Activated CD4-positive, alpha-beta T cell treated with anti-CD3 and anti-CD28 coated beads, Interleukin-2, amount 10 ng/mL, durations not matched to agents 24 days and 14 days (primary cell): ENCODE measurements at regions of chr1 and their contacts with region 1.

Region 1: DNA sequence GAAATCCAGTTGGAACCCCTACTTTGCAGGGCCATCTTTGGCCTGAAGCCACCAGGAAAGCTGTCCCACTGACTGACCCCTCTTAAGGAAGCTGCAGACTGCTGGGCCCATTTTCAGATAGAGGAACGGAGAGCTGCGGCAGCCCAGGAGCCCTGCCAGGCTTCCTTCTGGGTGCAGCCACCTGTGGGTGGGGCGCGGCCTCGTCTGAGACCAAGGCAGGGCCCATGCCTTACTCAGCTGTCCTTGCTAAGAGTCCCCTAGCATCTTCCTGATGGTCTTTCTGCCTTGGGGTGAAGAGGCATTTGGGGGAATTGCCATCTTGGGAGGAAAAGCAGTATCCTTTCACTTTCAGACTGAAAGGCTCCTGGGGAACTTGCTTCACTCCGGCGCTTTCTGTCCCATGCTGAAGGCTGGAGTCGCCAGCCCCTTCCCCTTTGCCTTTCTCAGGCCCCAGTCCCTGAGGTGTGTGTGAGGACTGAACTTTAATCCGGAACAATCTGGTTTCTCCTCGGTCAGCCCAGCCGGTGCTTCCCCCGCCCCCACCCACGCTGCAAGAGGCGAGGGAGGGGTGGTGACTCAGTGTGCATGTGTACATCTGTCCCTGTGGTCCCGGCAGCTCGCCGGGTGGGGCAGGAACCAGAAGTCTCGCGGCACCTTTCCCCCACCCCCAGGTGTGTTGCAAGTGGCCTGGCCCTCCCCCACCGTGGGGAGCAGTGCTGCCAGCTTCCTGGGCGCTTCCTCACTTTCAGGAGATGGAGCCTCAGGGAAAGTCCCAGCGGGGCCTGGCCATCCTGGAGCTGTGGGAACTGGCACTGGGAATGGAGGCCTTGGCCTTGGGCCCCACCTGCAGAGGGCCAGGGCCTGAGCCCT is 5.1 kb downstream of the ZC3H12A start:
- DNase-seq: peak; percentile 94
- H3K4me3 Mint-ChIP-seq: peak overlapping the region; percentile 97
- H3K27ac Mint-ChIP-seq: peak overlapping the region; percentile 98
- H3K4me1 Mint-ChIP-seq: peaks cover 32% of the 10 kb centered on the region
- H3K27me3 Mint-ChIP-seq: no peaks in the 10 kb centered on the region

Region 2: DNA sequence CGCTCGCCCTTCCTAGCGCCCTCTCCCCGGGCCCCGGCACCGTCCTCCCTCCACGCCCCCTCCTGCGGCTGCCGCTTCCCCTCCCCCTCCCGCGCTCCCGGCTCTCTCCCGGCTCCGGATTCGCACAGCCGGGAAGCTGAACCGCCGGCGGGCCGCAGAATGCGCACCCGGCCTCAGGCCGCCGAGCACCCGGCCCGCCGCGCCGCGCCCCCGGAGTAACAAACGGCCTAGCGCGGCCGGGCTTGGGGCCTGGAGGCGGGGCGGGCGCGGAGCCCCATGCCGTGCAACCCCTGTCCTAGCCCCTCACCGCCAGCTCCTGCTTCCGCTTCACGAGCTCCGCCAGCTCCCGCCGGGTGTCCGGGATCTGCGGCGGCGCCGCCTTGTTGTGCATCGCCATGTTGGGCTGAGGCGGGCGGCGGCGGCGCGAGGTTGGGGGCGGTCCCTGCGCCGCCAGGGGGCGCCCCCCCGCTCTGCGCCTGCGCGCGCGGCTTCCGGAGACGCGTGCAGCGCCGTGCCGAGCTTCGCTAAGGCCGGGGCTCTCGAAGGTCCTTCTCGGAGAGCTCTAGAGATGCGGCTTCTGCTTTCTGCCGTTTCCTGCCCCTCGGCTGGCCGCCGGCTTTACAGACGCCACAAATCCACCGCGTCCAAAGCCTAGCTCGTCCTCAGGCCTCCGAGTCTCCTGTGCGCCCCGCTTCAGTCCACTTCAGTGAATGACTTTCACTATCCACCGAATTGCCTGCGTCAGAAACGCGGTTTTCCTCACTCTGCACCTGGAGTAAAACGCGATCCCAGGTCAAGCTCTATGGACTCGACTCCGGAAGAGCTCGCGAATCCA is 35.1 kb after region 1 on chr1 and contains the start of gene MEAF6:
- intact Hi-C with region 1: loop called (anchors 1 kb)
- DNase-seq: peak; percentile 96
- H3K4me3 Mint-ChIP-seq: peak within 1 kb of the TSS; percentile 98
- H3K27ac Mint-ChIP-seq: peak within 1 kb of the TSS; percentile 97
- H3K4me1 Mint-ChIP-seq: peaks cover 39% of the 10 kb centered on the region
- H3K27me3 Mint-ChIP-seq: no peaks in the 10 kb centered on the region
- total RNA-seq, gene MEAF6: 94.4 and 95.6 TPM in 2 replicates

Region 3: DNA sequence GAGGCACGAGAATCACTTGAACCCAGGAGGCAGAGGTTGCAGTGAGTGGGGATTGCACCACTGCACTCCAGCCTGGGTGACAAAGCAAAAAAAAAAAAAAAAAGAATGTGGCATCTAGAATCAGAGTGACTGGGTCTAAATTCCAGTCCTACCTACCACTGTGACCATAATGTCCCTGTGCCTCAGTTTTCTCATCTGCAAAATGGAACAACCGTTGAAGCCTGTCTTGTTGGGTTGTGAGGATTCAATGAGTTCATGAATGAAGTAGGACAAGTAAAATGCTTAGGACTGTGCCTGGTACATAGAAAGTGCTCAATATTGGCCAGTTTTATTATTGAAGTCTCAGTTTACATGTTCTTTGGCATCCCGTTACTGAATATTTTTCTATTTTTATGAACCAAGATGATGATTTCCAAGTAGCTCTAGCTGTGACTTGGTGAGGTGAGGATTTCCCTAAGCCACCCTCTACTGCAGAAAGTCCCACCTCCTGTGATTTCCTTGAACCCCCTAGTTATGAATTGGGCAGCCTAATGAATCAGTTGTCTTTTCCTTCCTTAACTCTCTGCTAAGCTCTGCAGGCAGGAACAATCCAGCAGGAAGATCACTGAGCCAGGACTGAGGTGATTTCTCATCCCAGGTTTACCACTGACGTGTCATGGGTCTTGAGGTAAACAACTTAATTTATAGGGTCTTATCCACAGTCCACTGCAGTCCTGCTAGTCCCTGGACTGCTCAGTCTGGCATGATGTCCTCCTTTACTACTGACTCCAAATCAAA is 54.0 kb after region 1 on chr1:
- intact Hi-C with region 1: no loop called
- DNase-seq: no peak
- H3K4me3 Mint-ChIP-seq: no peak overlapping the region
- H3K27ac Mint-ChIP-seq: no peak overlapping the region
- H3K4me1 Mint-ChIP-seq: peaks cover 7% of the 10 kb centered on the region
- H3K27me3 Mint-ChIP-seq: no peaks in the 10 kb centered on the region

Region 4: DNA sequence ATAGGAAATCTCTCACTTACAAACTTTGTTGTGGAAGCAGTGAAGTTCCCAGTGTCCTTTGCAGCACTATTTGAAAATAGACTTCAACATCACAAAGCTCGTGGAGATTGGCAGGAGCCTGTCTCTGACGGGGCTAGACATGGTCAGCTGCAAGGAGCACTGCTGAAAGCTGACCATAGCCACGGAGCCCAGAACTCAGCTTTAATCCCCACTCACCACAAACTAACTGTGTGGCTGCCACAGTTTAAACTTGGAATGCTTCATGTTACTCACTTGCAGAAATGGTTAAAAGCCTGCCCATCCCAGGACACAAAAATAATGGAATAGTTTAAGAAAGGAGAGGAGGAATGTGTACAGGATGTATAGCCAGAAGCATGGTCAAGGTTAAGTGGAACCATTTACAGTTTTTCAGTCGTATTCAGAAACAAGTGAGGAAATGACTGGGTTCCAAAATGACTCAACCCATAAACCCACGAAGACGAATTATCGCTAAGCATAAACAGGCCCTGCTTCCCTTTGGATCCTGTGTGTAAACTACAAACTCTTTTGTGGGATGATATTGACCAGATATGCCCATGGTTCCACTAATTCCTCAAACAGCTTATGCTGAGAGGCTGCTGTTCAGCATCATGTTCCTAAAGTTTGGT is 95.5 kb after region 1 on chr1:
- intact Hi-C with region 1: loop called (anchors 5 kb)
- DNase-seq: peak; percentile 61
- H3K4me3 Mint-ChIP-seq: peak overlapping the region; percentile 61
- H3K27ac Mint-ChIP-seq: peak overlapping the region; percentile 85
- H3K4me1 Mint-ChIP-seq: peaks cover 61% of the 10 kb centered on the region
- H3K27me3 Mint-ChIP-seq: no peaks in the 10 kb centered on the region

Region 5: DNA sequence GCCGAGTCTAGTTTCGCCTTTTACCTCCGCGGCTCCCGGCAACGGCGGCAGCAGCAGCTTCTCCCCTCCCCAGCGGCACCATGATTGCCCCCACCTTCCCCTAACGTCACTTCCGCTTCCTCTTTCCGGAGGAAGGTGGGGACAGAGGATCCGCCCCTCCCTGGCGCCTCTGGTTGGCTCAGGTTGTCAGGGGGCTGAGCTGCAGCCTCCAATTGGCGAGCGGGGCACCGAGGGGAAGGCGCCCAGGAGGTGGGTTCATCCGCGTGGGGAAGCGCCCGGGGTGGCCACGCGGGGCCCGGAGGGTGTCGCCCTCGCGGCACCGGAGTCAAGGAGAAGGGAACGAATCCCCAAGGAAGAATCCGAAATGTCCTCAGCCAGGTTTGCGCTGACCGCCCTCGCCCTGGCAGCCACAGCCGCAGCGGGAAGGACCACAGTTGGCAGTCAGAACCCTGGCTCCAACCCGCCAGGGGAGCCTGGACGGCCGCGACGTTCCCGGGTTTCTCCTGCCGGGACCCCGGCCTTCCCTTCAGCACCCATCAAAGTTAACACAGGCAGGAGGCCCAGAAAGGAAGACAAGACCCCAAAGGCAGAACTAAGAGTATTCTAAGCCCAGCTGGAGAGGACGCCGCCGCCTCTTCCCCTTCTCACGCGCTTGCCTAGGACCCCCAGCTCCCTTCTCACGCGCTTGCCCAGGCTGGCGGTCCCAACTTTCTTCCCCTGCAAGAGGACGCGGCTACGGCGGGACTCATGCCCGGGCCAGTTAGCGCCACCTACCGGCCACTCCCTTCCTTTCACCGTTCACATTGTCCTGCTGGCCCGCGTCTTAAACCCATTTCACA is 380.2 kb after region 1 on chr1 and contains the start of gene MTF1:
- intact Hi-C with region 1: loop called (anchors 5 kb)
- DNase-seq: peak; percentile 99
- H3K4me3 Mint-ChIP-seq: peak within 1 kb of the TSS; percentile 89
- H3K27ac Mint-ChIP-seq: peak within 1 kb of the TSS; percentile 96
- H3K4me1 Mint-ChIP-seq: peaks cover 28% of the 10 kb centered on the region
- H3K27me3 Mint-ChIP-seq: no peaks in the 10 kb centered on the region
- total RNA-seq, gene MTF1: 31.2 and 31.6 TPM in 2 replicates